MCF 10A (cell line): ENCODE measurements at regions of chr22 and their contacts with region 1.

Region 1: DNA sequence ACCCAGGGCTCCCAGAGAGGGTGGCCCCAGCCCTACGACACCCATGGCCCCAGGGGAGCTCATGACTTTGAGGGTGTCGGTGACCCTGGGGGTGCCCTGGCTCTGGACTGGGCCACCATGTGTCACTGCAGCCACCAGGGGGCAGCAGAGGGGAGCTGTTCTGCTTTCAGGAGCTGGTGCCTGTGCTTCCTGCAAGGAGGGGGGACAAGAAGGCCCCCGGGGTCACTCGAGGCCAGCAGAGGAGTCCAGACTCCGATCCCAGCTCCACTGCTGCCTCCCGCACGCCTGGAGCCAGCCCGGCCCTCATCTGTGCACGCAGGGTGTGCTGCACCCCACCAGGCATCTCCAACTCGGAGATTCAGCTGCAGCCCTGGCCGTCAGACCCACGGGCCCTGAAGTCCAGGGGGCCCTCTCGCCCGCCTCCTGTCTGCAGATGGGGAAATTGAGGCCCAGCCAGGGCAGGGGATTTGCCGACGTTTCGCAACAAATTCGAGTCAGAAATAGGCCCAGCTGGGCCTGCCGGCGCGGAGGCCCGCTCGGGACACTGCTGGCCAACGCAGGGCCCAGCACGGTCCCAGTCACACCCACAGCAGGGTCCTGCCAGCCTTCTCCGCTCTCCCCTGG is 29.5 kb upstream of the WNT7B start:
- DNase-seq: peak; percentile 91
- H3K4me3 Mint-ChIP-seq: peak overlapping the region; percentile 54
- H3K27ac Mint-ChIP-seq: peak overlapping the region; percentile 91
- H3K4me1 Mint-ChIP-seq: peaks cover 16% of the 10 kb centered on the region
- H3K27me3 Mint-ChIP-seq: no peaks in the 10 kb centered on the region
- CTCF ChIP-seq: peak; percentile 79

Region 2: DNA sequence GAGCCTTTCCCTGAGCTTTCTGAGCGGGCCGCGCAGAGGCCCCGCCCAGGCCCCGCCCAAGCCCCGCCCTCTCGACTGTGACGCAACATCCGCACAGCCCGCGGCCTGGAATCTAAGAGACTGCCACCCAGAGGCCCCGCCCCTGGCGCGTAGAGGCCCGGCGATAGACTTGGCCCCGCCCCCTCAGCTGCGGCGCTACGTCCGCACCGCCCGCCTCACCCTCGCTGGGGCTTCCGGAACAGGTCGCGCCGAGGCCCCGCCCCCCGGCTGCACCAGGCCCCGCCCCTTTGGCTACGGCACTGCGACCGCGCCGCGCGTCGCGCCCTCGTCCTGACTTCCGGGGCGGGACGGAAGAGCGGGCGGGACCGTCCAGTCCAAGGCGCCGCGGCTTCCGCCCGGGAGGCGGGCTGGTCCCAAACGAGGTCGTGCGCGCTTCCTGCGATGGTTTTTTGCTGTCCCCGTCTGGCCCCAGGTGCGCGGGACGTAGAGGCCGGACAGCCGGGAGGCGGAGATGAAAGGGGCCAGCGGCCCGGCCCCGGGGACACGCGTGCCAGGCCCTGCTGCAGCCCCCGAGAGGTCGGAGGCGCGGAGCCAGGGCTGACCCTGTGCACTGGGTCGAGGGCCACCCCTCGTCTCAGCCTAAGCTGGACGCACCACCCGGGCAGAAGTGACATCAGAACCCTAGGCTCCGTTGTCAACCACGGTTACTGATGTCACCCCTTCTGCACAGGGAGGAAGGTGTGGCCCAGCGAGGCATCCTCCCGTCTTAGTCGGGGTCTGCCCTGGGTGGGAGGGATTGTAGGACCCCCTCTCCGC is 29.5 kb after region 1 on chr22:
- CTCF ChIA-PET with region 1: interaction called, 39 read pairs
- POLR2A ChIA-PET with region 1: interaction called, 76 read pairs
- intact Hi-C with region 1: no loop called
- DNase-seq: peak; percentile 98
- H3K4me3 Mint-ChIP-seq: peak overlapping the region; percentile 75
- H3K27ac Mint-ChIP-seq: peak overlapping the region; percentile 75
- H3K4me1 Mint-ChIP-seq: peaks cover 4% of the 10 kb centered on the region
- H3K27me3 Mint-ChIP-seq: no peaks in the 10 kb centered on the region
- CTCF ChIP-seq: no peak

Region 3: DNA sequence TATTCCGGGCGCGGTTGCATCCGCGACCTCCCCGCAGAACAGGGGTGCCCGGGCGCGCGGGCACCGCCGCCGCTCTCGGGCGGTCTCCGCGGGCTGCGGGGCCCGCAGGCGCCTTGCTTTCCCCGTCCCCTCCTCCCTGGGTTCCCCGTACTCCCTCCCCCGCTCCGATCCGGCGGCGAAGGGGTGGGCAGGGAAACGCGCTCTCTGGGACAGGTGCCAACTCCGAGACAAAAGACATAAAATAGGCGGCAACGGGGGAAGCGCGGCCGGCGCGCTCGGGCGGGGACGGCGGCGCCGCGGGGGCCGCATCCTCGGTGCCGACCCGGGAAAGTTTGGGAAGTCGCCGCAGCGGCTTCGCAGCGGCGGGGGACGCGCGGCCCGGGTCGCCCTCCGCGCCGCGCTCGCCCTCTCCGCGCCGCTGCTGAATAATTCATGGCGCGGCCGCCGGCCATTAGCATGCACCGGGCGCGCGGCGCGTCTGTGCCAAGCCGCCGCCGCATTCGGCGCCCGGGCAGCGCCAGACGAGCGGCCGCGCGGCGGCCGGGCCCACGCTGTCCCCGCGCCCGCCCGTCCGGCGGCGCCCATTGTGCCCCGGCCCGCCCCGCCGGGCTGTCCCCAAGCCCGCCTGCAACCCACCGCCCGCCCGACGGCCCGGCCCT is 65.1 kb after region 1 on chr22:
- CTCF ChIA-PET with region 1: interaction called, 13 read pairs
- POLR2A ChIA-PET with region 1: interaction called, 533 read pairs
- intact Hi-C with region 1: loop called (anchors 2 kb)
- DNase-seq: peak; percentile 96
- H3K4me3 Mint-ChIP-seq: peak overlapping the region; percentile 96
- H3K27ac Mint-ChIP-seq: peak overlapping the region; percentile 100
- H3K4me1 Mint-ChIP-seq: peaks cover 24% of the 10 kb centered on the region
- H3K27me3 Mint-ChIP-seq: no peaks in the 10 kb centered on the region
- CTCF ChIP-seq: no peak

Region 4: GRCh38 chr22:46108564-46109473 is 102.3 kb after region 1 on chr22:
- CTCF ChIA-PET with region 1: interaction called, 19 read pairs
- POLR2A ChIA-PET with region 1: interaction called, 31 read pairs
- intact Hi-C with region 1: no loop called
- DNase-seq: peak; percentile 72
- H3K4me3 Mint-ChIP-seq: peak overlapping the region; percentile 12
- H3K27ac Mint-ChIP-seq: peak overlapping the region; percentile 93
- H3K4me1 Mint-ChIP-seq: peaks cover 34% of the 10 kb centered on the region
- H3K27me3 Mint-ChIP-seq: no peaks in the 10 kb centered on the region
- CTCF ChIP-seq: peak; percentile 7

Region 5: DNA sequence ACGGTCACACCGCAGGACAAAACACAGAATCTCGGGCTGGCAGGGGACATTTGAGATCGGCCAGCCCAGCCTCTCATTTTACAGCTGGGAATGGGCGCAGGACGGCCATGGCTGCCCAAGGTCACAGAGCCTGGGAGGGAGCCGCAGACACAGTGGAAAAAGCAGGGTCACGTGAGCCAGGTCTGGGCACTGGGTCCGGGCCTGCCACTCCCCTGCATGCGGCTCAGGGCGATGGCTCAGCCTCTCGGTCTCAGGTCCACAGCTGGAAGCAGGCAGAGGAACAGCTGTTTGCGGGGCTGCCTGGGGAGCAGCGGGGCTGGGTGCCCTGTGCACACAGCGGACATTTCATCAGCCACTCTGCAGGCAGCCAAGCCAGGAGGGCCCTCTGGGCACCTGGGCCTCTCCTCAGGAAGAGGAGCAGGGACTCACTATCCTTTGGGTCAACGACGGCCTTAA is 133.4 kb after region 1 on chr22:
- CTCF ChIA-PET with region 1: no interaction called
- POLR2A ChIA-PET with region 1: no interaction called
- intact Hi-C with region 1: no loop called
- DNase-seq: peak; percentile 83
- H3K4me3 Mint-ChIP-seq: no peak overlapping the region
- H3K27ac Mint-ChIP-seq: no peak overlapping the region
- H3K4me1 Mint-ChIP-seq: no peaks in the 10 kb centered on the region
- H3K27me3 Mint-ChIP-seq: peaks cover 15% of the 10 kb centered on the region
- CTCF ChIP-seq: no peak

Region 6: GRCh38 chr22:46317646-46318045 is 311.2 kb after region 1 on chr22:
- CTCF ChIA-PET with region 1: interaction called, 20 read pairs
- POLR2A ChIA-PET with region 1: interaction called, 3 read pairs
- intact Hi-C with region 1: loop called (anchors 2 kb)
- DNase-seq: no peak
- H3K4me3 Mint-ChIP-seq: no peak overlapping the region
- H3K27ac Mint-ChIP-seq: no peak overlapping the region
- H3K4me1 Mint-ChIP-seq: no peaks in the 10 kb centered on the region
- H3K27me3 Mint-ChIP-seq: no peaks in the 10 kb centered on the region
- CTCF ChIP-seq: no peak